ENCODE measurements at regions of chr17 and their contacts with region 1.

Region 1: GRCh38 chr17:3827124-3827773 is 18.8 kb downstream of the NCBP3 start:
- DNase-seq: peak; percentile 84
- H3K4me3 Mint-ChIP-seq: no peak overlapping the region
- H3K27ac Mint-ChIP-seq: no peak overlapping the region
- H3K4me1 Mint-ChIP-seq: peaks cover 2% of the 10 kb centered on the region
- H3K27me3 Mint-ChIP-seq: no peaks in the 10 kb centered on the region

Region 2: DNA sequence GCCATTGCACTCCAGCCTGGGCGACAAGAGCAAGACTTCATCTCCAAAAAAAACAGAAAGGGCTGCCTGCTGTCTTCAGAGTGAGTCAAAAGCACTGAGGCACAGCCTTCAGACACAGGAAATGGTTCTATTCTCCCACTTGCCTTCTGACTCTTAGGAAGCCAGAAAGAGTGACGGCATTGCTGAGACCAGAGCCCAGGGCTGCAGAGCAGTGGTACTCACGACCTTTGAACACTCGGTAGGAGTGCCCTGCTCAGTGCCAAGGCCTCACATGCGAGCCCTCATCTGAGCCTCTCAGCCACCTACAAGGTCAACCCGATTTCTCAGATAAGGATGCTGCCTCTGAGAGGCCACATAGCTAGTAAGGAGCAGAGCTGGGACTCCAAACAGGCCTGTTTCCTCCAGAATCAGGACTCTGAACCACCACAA is 22.7 kb before region 1 on chr17:
- CTCF ChIA-PET with region 1: interaction called, 10 read pairs
- DNase-seq: no peak
- H3K4me3 Mint-ChIP-seq: no peak overlapping the region
- H3K27ac Mint-ChIP-seq: no peak overlapping the region
- H3K4me1 Mint-ChIP-seq: peaks cover 2% of the 10 kb centered on the region
- H3K27me3 Mint-ChIP-seq: no peaks in the 10 kb centered on the region

Region 3: DNA sequence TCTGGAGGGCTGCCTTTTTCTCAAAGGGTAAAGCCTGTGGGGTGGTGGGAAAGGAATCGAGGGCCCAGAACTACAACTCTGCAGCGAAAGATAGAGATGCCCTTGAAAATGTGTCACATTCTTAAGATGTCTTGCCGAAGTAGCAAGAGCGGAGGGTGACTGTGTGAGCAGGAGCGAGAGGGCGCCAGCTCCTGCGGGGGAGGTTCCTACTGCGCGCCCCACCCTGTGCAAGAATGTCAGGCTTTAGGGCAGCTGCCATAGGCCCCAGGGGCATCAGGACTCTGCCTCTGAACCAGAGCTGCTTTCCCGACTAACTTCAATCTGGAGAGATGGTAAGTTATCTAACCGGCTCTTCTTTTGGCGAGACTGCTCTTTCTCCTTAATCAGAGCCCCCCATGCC is 14.5 kb before region 1 on chr17:
- CTCF ChIA-PET with region 1: interaction called, 22 read pairs
- DNase-seq: peak; percentile 8
- H3K4me3 Mint-ChIP-seq: no peak overlapping the region
- H3K27ac Mint-ChIP-seq: no peak overlapping the region
- H3K4me1 Mint-ChIP-seq: no peaks in the 10 kb centered on the region
- H3K27me3 Mint-ChIP-seq: no peaks in the 10 kb centered on the region

Region 4: DNA sequence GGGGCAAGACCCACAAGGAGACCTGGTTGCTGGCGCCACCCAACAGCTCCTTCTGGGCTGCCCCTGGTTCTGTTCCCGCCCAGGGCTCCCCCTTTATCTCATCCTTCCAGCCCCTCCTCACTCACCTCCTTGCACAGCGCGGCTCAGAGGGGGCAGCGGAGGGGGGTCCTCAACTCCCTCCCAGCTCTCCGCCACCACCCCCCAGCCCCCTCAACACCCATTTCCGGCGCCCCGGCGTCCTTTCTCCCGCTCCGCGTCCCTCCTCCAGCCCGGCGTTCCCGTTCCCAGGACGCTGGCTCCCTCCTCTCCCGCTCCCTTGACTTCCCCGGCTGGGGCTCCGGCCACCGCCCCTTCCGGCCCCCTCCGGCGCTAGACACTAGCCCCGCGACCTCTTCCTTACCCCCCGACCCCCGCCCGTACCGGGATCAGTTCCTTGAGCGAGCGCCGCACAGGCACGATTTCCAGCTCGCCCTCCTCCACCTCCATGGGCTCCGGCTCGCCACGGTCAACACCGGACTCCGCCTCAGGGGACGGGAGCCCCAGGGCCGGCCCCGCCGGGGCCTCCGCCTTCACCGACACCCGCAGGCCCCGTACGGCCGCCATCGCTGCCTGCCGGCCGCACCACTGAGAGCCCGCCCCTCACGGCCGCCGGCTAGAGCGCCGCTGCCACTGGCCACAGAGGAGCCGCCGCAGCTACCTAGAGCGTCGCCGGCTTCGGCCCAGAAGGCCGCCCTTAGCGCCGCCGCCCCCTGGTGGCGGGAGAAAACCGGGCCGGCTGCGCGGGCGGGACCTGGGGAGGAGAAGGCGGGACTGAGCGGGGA is 18.6 kb after region 1 on chr17 and contains the start of gene NCBP3:
- CTCF ChIA-PET with region 1: interaction called, 40 read pairs
- DNase-seq: peak; percentile 89
- H3K4me3 Mint-ChIP-seq: peak within 1 kb of the TSS; percentile 95
- H3K27ac Mint-ChIP-seq: peak within 1 kb of the TSS; percentile 91
- H3K4me1 Mint-ChIP-seq: peaks cover 26% of the 10 kb centered on the region
- H3K27me3 Mint-ChIP-seq: peaks cover 37% of the 10 kb centered on the region

Region 5: GRCh38 chr17:3865176-3865575 is 37.9 kb after region 1 on chr17:
- CTCF ChIA-PET with region 1: no interaction called
- DNase-seq: no peak
- H3K4me3 Mint-ChIP-seq: no peak overlapping the region
- H3K27ac Mint-ChIP-seq: no peak overlapping the region
- H3K4me1 Mint-ChIP-seq: no peaks in the 10 kb centered on the region
- H3K27me3 Mint-ChIP-seq: no peaks in the 10 kb centered on the region

Region 6: GRCh38 chr17:3965118-3965803 is 138.0 kb after region 1 on chr17:
- CTCF ChIA-PET with region 1: no interaction called
- DNase-seq: peak; percentile 86
- H3K4me3 Mint-ChIP-seq: peak overlapping the region; percentile 90
- H3K27ac Mint-ChIP-seq: peak overlapping the region; percentile 98
- H3K4me1 Mint-ChIP-seq: peaks cover 46% of the 10 kb centered on the region
- H3K27me3 Mint-ChIP-seq: peaks cover 27% of the 10 kb centered on the region